Esophagus squamous epithelium (tissue), 5 donors: ENCODE measurements at regions of chr5 and their contacts with region 1.

Region 1: GRCh38 chr5:135139381-135140137 is 105.5 kb upstream of the PITX1 start:
- DNase-seq: no peak
- H3K4me3 ChIP-seq: peak overlapping the region in 1 of 4 donors; percentile 21
- H3K27ac ChIP-seq: peak overlapping the region; percentile 91 to 96 (median 95)
- H3K4me1 ChIP-seq: peaks cover 58 to 90% (median 72%) of the 10 kb centered on the region in 3 donors
- H3K27me3 ChIP-seq: no peaks in the 10 kb centered on the region
- CTCF ChIP-seq: no peak
- POLR2A ChIP-seq: peak in 2 of 4 donors; percentile 44 to 45

Region 2: DNA sequence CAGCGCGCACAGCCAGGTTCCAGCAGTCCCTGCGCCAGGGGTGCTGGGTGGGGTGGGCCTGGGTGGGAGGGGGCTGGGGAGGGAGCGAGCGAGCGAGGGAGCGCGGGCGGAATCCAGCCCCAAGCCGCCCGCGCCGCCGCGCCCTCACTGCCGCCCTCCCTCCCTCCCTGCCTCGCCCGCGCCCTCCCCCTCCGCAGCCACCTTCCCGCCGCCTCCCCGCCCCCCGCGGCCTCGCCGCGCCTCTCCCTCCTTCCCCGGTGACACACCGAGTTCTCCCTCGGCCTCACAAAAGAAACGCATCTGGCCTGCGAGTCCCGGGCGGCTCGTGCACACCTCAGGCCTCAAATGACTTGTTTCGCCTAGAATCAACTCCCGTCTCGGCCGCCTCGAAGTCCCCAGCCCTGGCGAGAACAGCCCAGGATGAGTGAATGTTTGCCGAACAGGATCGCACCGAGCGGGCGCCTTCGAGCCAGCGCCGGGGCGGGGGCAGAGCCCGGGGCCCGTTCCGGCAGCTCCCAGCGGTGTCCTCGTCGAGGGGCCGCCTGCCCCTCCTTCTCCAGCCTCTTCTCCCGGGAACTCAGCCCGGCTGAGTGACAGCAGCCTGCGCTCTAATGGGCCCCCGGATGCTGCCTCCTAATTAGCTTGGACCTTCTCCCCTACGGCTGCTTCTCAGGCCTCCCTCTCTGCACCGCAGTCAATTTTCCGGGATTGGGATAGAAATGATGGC is 105.2 kb before region 1 on chr5:
- intact Hi-C with region 1: loop called (anchors 10 kb)
- DNase-seq: no peak
- H3K4me3 ChIP-seq: peak overlapping the region; percentile 79 to 92 (median 88)
- H3K27ac ChIP-seq: peak overlapping the region; percentile 96 to 99 (median 98)
- H3K4me1 ChIP-seq: peaks cover 11 to 71% (median 27%) of the 10 kb centered on the region in 3 donors
- H3K27me3 ChIP-seq: peaks cover 0 to 99% (median 2%) of the 10 kb centered on the region in 4 donors
- CTCF ChIP-seq: no peak
- POLR2A ChIP-seq: peak in 2 of 4 donors; percentile 34 to 40

Region 3: DNA sequence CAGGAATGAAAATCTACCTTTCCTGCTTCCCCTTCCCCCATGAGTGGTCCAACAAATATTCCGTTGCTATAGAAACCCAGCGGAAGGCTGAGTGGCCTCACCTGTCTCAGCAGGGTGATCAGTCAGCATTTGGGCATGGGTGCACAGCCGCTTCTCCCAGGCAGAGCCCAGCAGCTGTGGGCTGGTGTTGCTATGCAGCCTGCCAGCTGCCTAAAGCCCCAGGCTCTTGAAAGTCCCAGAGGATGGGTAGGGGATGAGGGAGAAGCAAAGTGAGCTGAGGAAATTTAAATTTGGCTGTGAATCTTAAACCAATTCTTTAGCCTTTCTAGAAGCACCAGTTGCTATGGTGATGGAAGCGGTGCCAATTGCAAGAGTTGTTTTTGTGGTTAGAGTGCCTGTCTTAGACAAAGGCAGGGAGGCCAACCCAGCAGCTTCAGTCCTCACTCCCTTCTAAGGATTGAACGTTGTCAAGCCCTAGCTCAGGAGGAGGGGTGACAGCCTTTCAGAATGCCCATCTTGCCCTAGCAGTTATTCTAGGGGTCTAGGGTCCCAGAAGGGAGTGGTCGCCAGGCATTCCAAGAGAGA is 46.0 kb after region 1 on chr5:
- intact Hi-C with region 1: loop called (anchors 5 kb)
- DNase-seq: no peak
- H3K4me3 ChIP-seq: no peak overlapping the region
- H3K27ac ChIP-seq: peak overlapping the region; percentile 88 to 97 (median 92)
- H3K4me1 ChIP-seq: peaks cover 7 to 77% (median 25%) of the 10 kb centered on the region in 3 donors
- H3K27me3 ChIP-seq: no peaks in the 10 kb centered on the region
- CTCF ChIP-seq: no peak
- POLR2A ChIP-seq: peak in 3 of 4 donors; percentile 35 to 55 (median 44)